ENCODE measurements at regions of chr1 and their contacts with region 1.

Region 1: GRCh38 chr1:224851210-224851847 is 78.1 kb upstream of the DNAH14 start:
- DNase-seq: peak in 1 of 2 experiments; percentile 91
- H3K4me3 ChIP-seq: no peak overlapping the region
- H3K27ac ChIP-seq: no peak overlapping the region
- H3K4me1 ChIP-seq: peaks cover 3 to 8% (median 5%) of the 10 kb centered on the region in 4 experiments
- H3K27me3 ChIP-seq: no peaks in the 10 kb centered on the region
- CTCF ChIP-seq: peak; percentile 81 to 93 (median 87)
- EP300 ChIP-seq: no peak
- POLR2A ChIP-seq: no peak
- RAD21 ChIP-seq: peak; percentile 80 to 83

Region 2: GRCh38 chr1:224679606-224680005 is 171.7 kb before region 1 on chr1:
- CTCF ChIA-PET with region 1: interaction called, 12 read pairs
- POLR2A ChIA-PET with region 1: no interaction called
- DNase-seq: no peak
- H3K4me3 ChIP-seq: no peak overlapping the region
- H3K27ac ChIP-seq: no peak overlapping the region
- H3K4me1 ChIP-seq: no peaks in the 10 kb centered on the region; a peak in 1 of 7 replicates
- H3K27me3 ChIP-seq: no peaks in the 10 kb centered on the region
- CTCF ChIP-seq: no peak
- EP300 ChIP-seq: no peak
- POLR2A ChIP-seq: no peak
- RAD21 ChIP-seq: no peak

Region 3: GRCh38 chr1:224736619-224737352 is 114.5 kb before region 1 on chr1:
- CTCF ChIA-PET with region 1: interaction called, 91 read pairs
- POLR2A ChIA-PET with region 1: no interaction called
- DNase-seq: no peak
- H3K4me3 ChIP-seq: no peak overlapping the region
- H3K27ac ChIP-seq: no peak overlapping the region
- H3K4me1 ChIP-seq: peaks cover 12 to 26% (median 13%) of the 10 kb centered on the region in 4 experiments
- H3K27me3 ChIP-seq: peaks cover 0 to 2% (median 0%) of the 10 kb centered on the region in 4 experiments; a peak in 1 of 7 replicates
- CTCF ChIP-seq: no peak
- EP300 ChIP-seq: no peak
- POLR2A ChIP-seq: no peak
- RAD21 ChIP-seq: no peak

Region 4: DNA sequence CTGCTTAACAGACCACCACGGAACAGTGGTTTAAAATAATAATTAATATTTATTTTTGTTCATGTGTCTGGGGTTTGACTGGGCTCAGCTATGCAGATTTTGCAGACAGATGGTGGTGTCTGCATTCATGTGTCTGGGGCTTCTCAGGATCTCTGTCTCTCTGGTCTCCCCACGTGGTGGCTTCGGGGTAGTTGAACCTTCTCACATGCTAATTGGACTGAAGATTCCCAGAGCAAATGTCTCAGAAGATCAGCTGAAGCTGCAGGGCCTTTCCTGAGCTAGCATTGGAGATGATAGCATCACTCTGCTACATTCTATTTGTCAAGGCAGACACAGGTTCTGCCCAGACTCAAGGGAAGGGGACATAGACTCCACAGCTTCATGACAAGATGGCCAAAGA is 31.0 kb before region 1 on chr1:
- CTCF ChIA-PET with region 1: interaction called, 12 read pairs
- POLR2A ChIA-PET with region 1: no interaction called
- DNase-seq: no peak
- H3K4me3 ChIP-seq: no peak overlapping the region
- H3K27ac ChIP-seq: no peak overlapping the region
- H3K4me1 ChIP-seq: no peaks in the 10 kb centered on the region
- H3K27me3 ChIP-seq: no peaks in the 10 kb centered on the region
- CTCF ChIP-seq: no peak
- EP300 ChIP-seq: no peak
- POLR2A ChIP-seq: no peak
- RAD21 ChIP-seq: no peak

Region 5: GRCh38 chr1:224879162-224879803 is 28.0 kb after region 1 on chr1:
- CTCF ChIA-PET with region 1: interaction called, 60 read pairs
- POLR2A ChIA-PET with region 1: interaction called, 4 read pairs
- DNase-seq: no peak
- H3K4me3 ChIP-seq: no peak overlapping the region
- H3K27ac ChIP-seq: no peak overlapping the region
- H3K4me1 ChIP-seq: peaks cover 6 to 24% (median 16%) of the 10 kb centered on the region in 4 experiments; a peak in 5 of 7 replicates
- H3K27me3 ChIP-seq: no peaks in the 10 kb centered on the region
- CTCF ChIP-seq: no peak
- EP300 ChIP-seq: no peak
- POLR2A ChIP-seq: no peak
- RAD21 ChIP-seq: no peak

Region 6: GRCh38 chr1:224938652-224939051 is 87.3 kb after region 1 on chr1:
- CTCF ChIA-PET with region 1: no interaction called
- POLR2A ChIA-PET with region 1: no interaction called
- DNase-seq: no peak
- H3K4me3 ChIP-seq: no peak overlapping the region
- H3K27ac ChIP-seq: no peak overlapping the region
- H3K4me1 ChIP-seq: no peaks in the 10 kb centered on the region
- H3K27me3 ChIP-seq: no peaks in the 10 kb centered on the region
- CTCF ChIP-seq: no peak
- EP300 ChIP-seq: no peak
- POLR2A ChIP-seq: no peak
- RAD21 ChIP-seq: no peak

Region 7: DNA sequence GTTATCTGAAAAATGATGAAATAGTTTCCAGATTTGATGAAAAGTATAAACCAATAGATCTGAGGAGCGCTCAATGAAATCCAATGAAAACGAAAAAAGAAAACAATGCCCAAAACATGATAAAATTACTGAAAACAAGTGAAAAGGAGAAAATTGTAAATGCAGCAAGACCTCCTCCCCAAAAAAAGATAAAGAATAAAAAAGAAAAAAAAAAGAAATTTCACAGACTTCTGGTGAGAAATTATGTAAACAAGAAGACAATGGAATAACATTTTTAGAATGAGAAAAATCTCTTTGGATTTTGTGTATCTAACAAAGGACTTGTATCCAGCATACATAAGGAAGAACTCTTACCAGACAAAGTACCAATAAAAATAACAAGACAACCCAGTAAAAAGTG is 212.4 kb after region 1 on chr1:
- CTCF ChIA-PET with region 1: no interaction called
- POLR2A ChIA-PET with region 1: no interaction called
- DNase-seq: no peak
- H3K4me3 ChIP-seq: no peak overlapping the region
- H3K27ac ChIP-seq: no peak overlapping the region
- H3K4me1 ChIP-seq: no peaks in the 10 kb centered on the region
- H3K27me3 ChIP-seq: no peaks in the 10 kb centered on the region
- CTCF ChIP-seq: no peak
- EP300 ChIP-seq: no peak
- POLR2A ChIP-seq: no peak
- RAD21 ChIP-seq: no peak